A673 (cell line): ENCODE measurements at regions of chr11 and their contacts with region 1.

Region 1: GRCh38 chr11:3775736-3776406 is 21.5 kb downstream of the NUP98 start:
- DNase-seq: no peak
- H3K4me3 ChIP-seq: no peak overlapping the region
- H3K27ac ChIP-seq: no peak overlapping the region
- H3K4me1 ChIP-seq: no peaks in the 10 kb centered on the region
- H3K27me3 ChIP-seq: no peaks in the 10 kb centered on the region
- CTCF ChIP-seq: 0 out of 2 replicates have a peak, but pooled peaks have one; percentile 13

Region 2: DNA sequence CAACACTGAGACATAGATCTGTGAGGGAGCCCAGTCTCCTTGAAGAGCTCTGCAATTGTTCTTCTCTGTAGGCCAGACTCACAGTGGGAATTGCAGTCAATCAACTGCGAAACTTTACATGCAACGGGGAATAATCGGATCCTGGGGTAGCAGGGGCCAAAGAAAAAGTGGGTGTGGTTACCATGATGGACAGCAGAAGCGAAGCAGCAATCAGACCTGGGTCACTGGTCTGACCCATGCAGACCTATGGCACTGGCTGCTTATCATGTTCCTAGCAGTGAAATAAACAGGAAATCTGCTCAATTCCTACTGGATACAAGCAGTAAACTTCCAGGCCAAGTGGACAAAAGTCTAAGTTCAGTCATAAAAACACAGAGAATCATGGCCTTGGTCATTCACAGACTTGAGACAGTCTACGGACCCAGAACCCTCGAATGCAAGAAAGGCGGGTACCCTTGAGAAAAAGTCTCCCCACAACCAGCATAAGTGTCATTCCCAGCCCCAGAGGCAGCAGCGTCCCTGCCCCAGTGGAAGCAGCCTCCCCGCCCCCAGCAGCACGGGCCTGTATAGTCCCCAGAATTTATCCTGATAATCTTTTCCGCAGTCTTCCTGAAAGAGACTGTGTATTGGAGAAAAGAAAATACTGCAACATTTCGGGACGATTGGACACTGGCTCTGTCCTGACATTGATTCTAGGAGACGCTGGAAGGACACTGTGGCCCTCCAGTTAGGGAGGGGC is 1540.1 kb before region 1 on chr11:
- CTCF ChIA-PET with region 1: no interaction called
- POLR2A ChIA-PET with region 1: no interaction called
- intact Hi-C with region 1: no loop called
- DNase-seq: no peak
- H3K4me3 ChIP-seq: no peak overlapping the region
- H3K27ac ChIP-seq: no peak overlapping the region
- H3K4me1 ChIP-seq: no peaks in the 10 kb centered on the region
- H3K27me3 ChIP-seq: peaks cover 6% of the 10 kb centered on the region
- CTCF ChIP-seq: no peak

Region 3: GRCh38 chr11:3723014-3723708 is 52.7 kb before region 1 on chr11:
- CTCF ChIA-PET with region 1: no interaction called
- POLR2A ChIA-PET with region 1: no interaction called
- intact Hi-C with region 1: loop called (anchors 10 kb)
- DNase-seq: peak; percentile 84
- H3K4me3 ChIP-seq: no peak overlapping the region
- H3K27ac ChIP-seq: peak overlapping the region; percentile 68
- H3K4me1 ChIP-seq: peaks cover 7% of the 10 kb centered on the region
- H3K27me3 ChIP-seq: no peaks in the 10 kb centered on the region
- CTCF ChIP-seq: no peak